ENCODE measurements at regions of chr2 and their contacts with region 1.

Region 1: DNA sequence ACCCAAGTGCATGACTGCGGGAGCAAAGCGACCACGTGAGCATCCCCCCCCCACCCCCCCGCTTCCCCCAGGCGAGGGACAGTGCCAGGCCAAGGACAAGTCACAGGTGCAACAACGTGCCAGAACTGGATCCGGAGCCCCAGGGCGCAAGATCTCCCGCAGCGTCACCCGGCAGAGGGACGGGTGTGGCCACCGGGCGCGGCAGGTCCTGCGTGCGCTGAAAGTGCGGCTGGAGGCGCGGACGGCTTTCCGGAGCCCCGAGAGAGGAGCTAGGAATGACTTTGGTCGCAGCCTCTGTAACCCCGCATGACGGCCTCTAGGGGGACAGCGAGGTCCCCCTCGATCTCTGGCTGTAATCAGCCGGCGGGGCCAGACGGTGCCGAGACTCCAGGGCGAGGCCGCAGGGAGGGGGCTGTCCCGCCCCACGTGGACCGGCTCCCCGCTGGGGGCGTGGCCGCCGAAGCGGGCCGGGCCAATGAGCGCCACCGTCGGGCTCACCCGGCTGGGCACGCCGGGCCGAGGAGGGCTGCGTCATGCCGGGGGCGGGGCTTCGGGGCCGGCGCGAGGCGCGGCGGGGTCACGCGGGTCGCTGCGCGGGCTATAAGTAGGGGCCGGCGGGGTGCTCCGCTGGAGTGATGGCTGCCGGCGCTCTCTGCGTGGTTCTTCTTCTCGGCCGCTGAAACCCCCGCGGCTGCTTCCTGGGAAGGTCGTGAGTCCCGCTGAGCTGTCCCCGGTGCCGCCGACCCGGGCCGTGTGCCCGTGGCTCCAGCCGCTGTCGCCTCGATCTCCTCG is at the start of gene SLC20A1:
- DNase-seq: peak; percentile 93 to 100 (median 97)
- H3K4me3 ChIP-seq: peak within 1 kb of the TSS; percentile 71 to 99 (median 93)
- H3K27ac ChIP-seq: peak within 1 kb of the TSS; percentile 86 to 99 (median 97)
- H3K27me3 ChIP-seq: no peaks in the 10 kb centered on the region
- CTCF ChIP-seq: peak in 50 of 56 donors; percentile 16 to 63 (median 43)
- total RNA-seq, gene SLC20A1: 41.1 to 97.4 (median 66.6) TPM

Region 2: GRCh38 chr2:112626604-112627059 is 18.9 kb before region 1 on chr2:
- intact Hi-C with region 1: loop called (anchors 2 kb)
- DNase-seq: peak; percentile 72 to 88 (median 81)
- H3K4me3 ChIP-seq: peak overlapping the region; percentile 14 to 69 (median 52)
- H3K27ac ChIP-seq: peak overlapping the region in 56 of 59 donors; percentile 6 to 92 (median 73)
- H3K27me3 ChIP-seq: no peaks in the 10 kb centered on the region
- CTCF ChIP-seq: peak; percentile 74 to 98 (median 92)

Region 3: DNA sequence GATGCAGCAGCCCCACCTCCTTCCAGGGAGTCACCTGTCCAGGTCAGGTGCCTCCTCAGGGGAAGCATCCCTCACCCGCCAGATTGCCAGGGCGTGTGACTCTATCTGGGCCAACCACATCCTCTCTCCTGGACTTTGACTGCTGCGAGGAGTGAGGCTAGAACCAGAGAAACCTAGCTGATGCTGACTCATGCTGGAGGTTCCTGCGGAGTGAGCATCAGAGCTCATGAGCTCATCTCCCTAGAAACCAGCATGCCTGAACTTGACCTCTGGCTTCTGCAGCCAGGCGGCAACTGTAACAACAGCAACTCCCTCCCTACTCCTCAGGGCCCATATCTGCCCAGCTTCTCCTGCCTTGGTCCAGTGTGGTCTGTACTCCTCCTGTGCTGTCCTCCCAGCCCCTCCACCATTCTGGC is 47.0 kb after region 1 on chr2:
- intact Hi-C with region 1: loop called (anchors 1 to 5 kb)
- DNase-seq: peak in 4 of 10 donors; percentile 26 to 61 (median 37)
- H3K4me3 ChIP-seq: no peak overlapping the region
- H3K27ac ChIP-seq: peak overlapping the region in 51 of 59 donors; percentile 2 to 85 (median 49)
- H3K27me3 ChIP-seq: no peaks in the 10 kb centered on the region
- CTCF ChIP-seq: no peak

Region 4: DNA sequence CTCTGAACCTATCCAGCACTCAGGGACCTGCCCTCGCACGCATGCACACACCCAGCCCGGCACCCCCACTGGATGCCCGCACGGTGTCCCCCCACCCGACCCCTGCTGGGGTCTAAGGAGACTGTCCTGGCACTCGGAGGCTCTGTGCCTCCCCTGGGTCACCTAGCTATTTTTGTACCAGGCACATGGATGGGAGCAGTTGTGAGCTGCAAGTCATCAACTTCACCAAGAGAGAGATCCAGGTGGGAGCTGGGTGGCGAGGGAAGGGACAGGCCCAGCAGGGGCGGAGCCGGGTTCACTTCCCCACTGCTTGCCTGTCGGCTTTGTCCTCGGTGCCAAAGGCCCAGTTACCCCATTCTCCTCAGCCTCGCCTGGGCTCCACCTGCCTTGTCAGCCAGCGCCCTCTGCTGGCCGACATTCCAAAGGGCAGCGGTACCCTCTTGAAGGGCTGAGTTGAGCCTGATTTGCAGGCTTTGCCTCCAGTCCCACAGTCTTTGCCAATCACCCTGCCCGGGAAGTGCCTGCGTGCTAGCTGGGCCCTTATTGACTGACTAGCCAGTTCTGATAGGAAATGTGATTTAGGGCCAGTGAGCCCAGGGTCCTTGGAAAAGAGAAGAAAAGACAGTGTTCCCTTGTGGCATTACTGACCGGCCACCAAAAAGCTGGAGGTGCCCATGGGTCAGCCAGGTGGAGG is 81.1 kb after region 1 on chr2:
- intact Hi-C with region 1: no loop called
- DNase-seq: peak; percentile 79 to 93 (median 88)
- H3K4me3 ChIP-seq: no peak overlapping the region
- H3K27ac ChIP-seq: peak overlapping the region in 2 of 59 donors; percentile 25 to 46
- H3K27me3 ChIP-seq: no peaks in the 10 kb centered on the region
- CTCF ChIP-seq: peak; percentile 81 to 99 (median 97)